Natural killer cell (primary cell): ENCODE measurements at regions of chr1 and their contacts with region 1.

Region 1: DNA sequence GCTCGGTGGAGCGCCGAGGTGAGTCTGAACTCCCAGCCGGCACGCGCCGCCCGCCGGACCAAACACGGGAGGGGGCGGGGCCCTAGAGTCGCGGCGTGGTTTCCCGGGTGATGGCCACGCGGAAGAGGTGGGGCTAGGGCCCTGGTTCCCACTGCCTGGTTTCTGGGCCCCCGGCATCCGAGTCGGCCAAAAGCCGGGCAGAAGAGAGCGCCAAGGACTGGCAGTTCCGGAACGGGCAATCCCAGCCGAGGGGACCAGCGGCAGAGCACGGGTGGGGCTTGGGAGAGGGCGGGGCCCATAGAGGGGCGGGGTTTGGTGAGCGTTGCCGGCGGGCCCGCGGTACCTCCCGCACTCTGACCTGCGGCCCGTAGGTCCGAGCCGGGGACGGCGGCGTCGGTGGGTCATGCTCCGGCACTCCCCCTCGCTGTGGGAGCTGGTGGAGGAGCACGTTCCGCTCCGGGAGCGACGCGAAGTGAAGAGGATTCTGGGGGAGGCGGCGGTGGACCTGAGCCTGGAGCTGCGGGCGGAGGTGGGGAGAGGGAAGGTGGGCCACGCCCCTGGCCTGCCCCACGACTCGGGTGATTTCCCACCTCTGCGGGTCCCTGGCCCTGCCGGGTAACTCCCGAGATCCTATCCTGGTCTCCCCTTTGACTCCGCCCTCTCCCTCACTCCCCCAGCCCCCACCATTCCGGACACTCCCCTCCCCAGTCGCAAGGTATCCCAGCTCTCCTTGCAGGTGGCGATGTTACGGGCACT is at the start of gene CCDC24:
- DNase-seq: peak; percentile 80 to 83
- ATAC-seq: peak; percentile 89 to 95 (median 91)
- H3K4me3 ChIP-seq: peak within 1 kb of the TSS; percentile 74
- H3K4me3 Mint-ChIP-seq: peak within 1 kb of the TSS; percentile 93
- H3K27ac ChIP-seq: peak within 1 kb of the TSS; percentile 41
- H3K27ac Mint-ChIP-seq: peak within 1 kb of the TSS; percentile 37 to 93
- H3K4me1 ChIP-seq: peaks cover 16% of the 10 kb centered on the region
- H3K4me1 Mint-ChIP-seq: peaks cover 4 to 19% of the 10 kb centered on the region in 2 donors
- H3K27me3 ChIP-seq: no peaks in the 10 kb centered on the region
- H3K27me3 Mint-ChIP-seq: no peaks in the 10 kb centered on the region
- CTCF ChIP-seq: no peak
- total RNA-seq, gene CCDC24: 3.8 to 5.2 (median 3.9) TPM

Region 2: DNA sequence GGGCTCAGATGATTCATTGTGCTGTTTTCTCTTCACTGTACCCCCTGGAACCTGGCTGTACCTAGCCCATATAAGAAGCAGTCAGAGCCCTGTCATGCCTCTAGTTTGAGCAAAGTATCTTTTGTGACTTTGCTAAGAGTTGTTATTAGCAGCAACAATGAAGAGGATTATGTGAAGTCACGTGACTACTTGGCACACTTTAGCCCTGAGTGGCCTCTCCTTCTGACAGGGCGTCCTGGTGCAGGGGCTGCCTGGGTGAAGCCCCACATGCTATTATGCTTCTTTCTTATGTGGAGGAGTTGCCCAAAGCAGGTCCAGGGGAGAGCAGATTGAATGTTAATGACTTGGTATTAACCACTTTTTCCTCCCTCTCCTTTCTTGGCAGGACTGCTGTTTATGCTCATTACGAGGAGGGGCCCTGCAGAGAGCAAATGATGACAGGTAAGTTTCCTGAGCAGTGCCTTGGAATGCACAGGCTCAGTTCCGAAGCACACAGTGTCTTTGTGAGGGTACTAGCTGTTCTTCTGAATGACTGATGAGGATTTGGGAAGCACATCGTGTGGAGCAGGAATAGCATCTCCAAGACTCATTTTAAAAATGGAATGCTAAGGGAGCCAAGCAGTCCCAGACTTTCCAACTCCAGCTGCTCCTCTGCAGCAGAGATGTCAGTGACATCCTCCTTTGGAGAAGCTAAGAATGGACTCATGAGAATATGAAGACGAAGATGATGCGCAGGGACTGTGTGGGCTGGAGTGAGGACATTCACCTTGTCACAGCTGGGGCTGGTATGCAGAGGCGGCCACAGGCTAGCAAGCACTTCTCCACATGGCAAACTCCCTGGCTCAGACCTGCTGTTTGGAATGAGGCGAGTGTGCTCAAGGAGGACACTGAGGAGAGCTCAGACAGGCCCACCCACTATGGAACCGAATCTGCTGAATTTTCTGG is 299.5 kb before region 1 on chr1:
- intact Hi-C with region 1: no loop called
- DNase-seq: no peak
- ATAC-seq: no peak
- H3K4me3 ChIP-seq: no peak overlapping the region
- H3K4me3 Mint-ChIP-seq: no peak overlapping the region
- H3K27ac ChIP-seq: no peak overlapping the region
- H3K27ac Mint-ChIP-seq: no peak overlapping the region
- H3K4me1 ChIP-seq: no peaks in the 10 kb centered on the region
- H3K4me1 Mint-ChIP-seq: peaks cover 6 to 15% of the 10 kb centered on the region in 2 donors
- H3K27me3 ChIP-seq: no peaks in the 10 kb centered on the region
- H3K27me3 Mint-ChIP-seq: no peaks in the 10 kb centered on the region
- CTCF ChIP-seq: no peak

Region 3: GRCh38 chr1:43834280-43835081 is 157.2 kb before region 1 on chr1:
- intact Hi-C with region 1: no loop called
- DNase-seq: no peak
- ATAC-seq: no peak
- H3K4me3 ChIP-seq: no peak overlapping the region
- H3K4me3 Mint-ChIP-seq: no peak overlapping the region
- H3K27ac ChIP-seq: no peak overlapping the region
- H3K27ac Mint-ChIP-seq: no peak overlapping the region
- H3K4me1 ChIP-seq: peaks cover 27% of the 10 kb centered on the region
- H3K4me1 Mint-ChIP-seq: peaks cover 11 to 13% of the 10 kb centered on the region in 2 donors
- H3K27me3 ChIP-seq: no peaks in the 10 kb centered on the region
- H3K27me3 Mint-ChIP-seq: no peaks in the 10 kb centered on the region
- CTCF ChIP-seq: no peak

Region 4: GRCh38 chr1:44029906-44030604 is 38.4 kb after region 1 on chr1:
- intact Hi-C with region 1: loop called (anchors 1 kb)
- DNase-seq: peak; percentile 76 to 89
- ATAC-seq: peak; percentile 84 to 88 (median 84)
- H3K4me3 ChIP-seq: peak overlapping the region; percentile 74
- H3K4me3 Mint-ChIP-seq: peak overlapping the region; percentile 94
- H3K27ac ChIP-seq: peak overlapping the region; percentile 72
- H3K27ac Mint-ChIP-seq: peak overlapping the region; percentile 74 to 90
- H3K4me1 ChIP-seq: peaks cover 23% of the 10 kb centered on the region
- H3K4me1 Mint-ChIP-seq: peaks cover 13 to 20% of the 10 kb centered on the region in 2 donors
- H3K27me3 ChIP-seq: no peaks in the 10 kb centered on the region
- H3K27me3 Mint-ChIP-seq: peaks cover 0 to 2% of the 10 kb centered on the region in 2 donors
- CTCF ChIP-seq: no peak